Activated CD4-positive, alpha-beta memory T cell treated with anti-CD3 and anti-CD28 coated beads for 36 hours (primary cell): ENCODE measurements at regions of chr3 and their contacts with region 1.

Region 1: DNA sequence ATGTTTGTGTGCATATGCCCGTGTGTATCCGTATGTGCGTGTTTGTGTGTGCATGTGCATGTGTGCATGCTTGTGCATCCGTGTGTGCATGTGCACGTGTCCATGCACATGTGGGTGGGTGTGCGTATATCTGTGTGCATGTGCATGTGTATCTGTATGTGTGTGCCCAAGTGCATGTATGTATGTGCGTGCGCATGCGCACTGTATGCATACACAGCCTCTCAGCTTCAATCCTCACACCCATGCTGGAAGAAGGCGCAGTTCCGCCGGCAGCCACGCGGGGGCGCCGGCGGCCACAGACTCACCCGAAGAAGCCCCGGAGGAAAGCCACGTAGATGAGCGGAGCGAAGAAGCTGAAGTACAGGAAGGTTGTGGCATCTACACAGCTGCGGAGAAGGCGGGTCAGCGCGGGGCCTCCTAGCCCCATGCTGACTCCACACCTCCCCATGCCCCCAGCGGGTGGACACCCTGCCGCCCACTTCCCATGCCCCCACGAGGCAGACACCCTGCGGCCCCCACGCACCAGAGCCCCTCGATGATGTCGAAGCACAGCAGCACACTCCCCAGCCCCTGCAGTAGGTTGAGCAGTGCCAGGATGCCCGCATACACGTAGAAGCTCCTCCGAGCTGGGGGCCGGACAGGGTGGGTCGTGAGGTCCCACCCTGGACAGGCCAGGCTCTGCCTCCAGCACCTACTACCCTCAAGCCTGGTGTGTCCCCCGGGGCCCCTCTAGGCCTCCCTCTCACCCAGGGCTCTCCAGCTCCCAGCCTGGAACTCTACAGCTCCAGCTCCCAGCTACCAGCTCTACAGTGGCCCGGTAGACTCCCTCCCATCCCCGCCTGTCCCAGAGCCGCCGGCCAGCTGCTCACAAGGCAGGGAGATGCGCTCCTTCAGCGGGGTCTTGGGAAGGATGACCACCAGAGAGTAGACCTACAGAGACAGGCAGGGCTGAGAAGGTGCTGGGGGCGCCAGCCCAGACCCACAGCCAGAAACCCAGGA is 15.4 kb downstream of the TPRA1 start:
- DNase-seq: peak; percentile 91
- H3K4me3 Mint-ChIP-seq: no peak overlapping the region
- H3K27ac Mint-ChIP-seq: no peak overlapping the region
- H3K4me1 Mint-ChIP-seq: peaks cover 8% of the 10 kb centered on the region
- H3K27me3 Mint-ChIP-seq: no peaks in the 10 kb centered on the region

Region 2: GRCh38 chr3:127544192-127544802 is 30.9 kb before region 1 on chr3:
- CTCF ChIA-PET with region 1: interaction called, 22 read pairs
- POLR2A ChIA-PET with region 1: no interaction called
- intact Hi-C with region 1: no loop called
- DNase-seq: peak; percentile 77
- H3K4me3 Mint-ChIP-seq: no peak overlapping the region
- H3K27ac Mint-ChIP-seq: no peak overlapping the region
- H3K4me1 Mint-ChIP-seq: peaks cover 11% of the 10 kb centered on the region
- H3K27me3 Mint-ChIP-seq: peaks cover 3% of the 10 kb centered on the region

Region 3: DNA sequence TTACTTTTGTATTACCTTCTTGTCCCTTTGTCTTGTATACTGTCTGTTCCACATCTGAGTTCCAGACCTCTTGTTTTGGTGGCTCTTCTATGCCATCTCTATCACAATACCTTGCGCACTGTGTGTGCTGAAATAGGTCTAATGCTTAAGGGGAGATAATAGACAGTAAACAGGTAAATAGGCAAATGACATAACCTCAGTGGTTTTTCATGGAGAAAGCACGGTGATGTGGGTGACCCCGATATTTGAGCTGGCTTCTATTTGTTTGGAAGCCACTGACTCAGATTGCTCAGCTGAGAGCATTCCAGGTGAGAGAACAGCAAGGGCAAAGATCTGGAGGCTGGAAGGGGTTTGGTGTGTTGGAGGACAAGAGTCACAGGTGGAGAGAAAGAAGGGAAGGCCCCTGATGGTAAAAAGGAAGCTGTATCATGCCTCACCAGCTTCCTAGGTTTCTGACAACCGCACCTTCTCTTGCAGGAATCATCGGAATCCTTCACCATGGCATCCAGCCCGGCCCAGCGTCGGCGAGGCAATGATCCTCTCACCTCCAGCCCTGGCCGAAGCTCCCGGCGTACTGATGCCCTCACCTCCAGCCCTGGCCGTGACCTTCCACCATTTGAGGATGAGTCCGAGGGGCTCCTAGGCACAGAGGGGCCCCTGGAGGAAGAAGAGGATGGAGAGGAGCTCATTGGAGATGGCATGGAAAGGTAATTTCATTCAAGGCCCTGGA is 23.8 kb after region 1 on chr3:
- CTCF ChIA-PET with region 1: interaction called, 29 read pairs
- POLR2A ChIA-PET with region 1: interaction called, 8 read pairs
- intact Hi-C with region 1: loop called (anchors 2 kb)
- DNase-seq: no peak
- H3K4me3 Mint-ChIP-seq: peak overlapping the region; percentile 92
- H3K27ac Mint-ChIP-seq: peak overlapping the region; percentile 90
- H3K4me1 Mint-ChIP-seq: peaks cover 44% of the 10 kb centered on the region
- H3K27me3 Mint-ChIP-seq: no peaks in the 10 kb centered on the region

Region 4: GRCh38 chr3:127672516-127673190 is 97.5 kb after region 1 on chr3 and contains the start of gene ABTB1:
- CTCF ChIA-PET with region 1: interaction called, 9 read pairs
- POLR2A ChIA-PET with region 1: no interaction called
- intact Hi-C with region 1: loop called (anchors 5 kb)
- DNase-seq: peak; percentile 91
- H3K4me3 Mint-ChIP-seq: peak within 1 kb of the TSS; percentile 89
- H3K27ac Mint-ChIP-seq: peak within 1 kb of the TSS; percentile 89
- H3K4me1 Mint-ChIP-seq: peaks cover 23% of the 10 kb centered on the region
- H3K27me3 Mint-ChIP-seq: no peaks in the 10 kb centered on the region
- total RNA-seq, gene ABTB1: 14.8 TPM

Region 5: DNA sequence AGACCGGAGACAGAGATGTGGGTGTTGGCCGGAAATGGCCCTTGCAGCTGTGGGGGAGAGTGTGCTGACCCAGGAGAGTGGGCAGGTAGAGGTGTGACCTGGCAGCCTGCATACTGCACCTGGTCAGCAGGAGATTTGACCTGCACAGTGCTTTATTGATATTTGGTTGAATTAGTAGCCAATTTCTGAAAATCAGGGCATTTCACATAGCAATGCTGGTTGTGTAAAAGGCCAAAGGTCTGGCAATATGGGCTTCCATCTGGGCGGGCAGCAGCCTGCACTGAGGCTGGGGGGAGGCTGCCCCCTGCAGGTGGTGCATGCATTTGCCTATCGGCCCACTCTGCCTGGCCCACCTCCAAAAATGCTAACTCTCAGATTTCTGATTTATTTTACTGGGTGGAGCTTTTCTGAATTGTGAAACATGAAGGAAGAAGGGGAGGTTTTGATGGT is 256.6 kb after region 1 on chr3:
- CTCF ChIA-PET with region 1: interaction called, 8 read pairs
- POLR2A ChIA-PET with region 1: no interaction called
- intact Hi-C with region 1: loop called (anchors 10 kb)
- DNase-seq: peak; percentile 32
- H3K4me3 Mint-ChIP-seq: no peak overlapping the region
- H3K27ac Mint-ChIP-seq: no peak overlapping the region
- H3K4me1 Mint-ChIP-seq: no peaks in the 10 kb centered on the region
- H3K27me3 Mint-ChIP-seq: peaks cover 11% of the 10 kb centered on the region

Region 6: DNA sequence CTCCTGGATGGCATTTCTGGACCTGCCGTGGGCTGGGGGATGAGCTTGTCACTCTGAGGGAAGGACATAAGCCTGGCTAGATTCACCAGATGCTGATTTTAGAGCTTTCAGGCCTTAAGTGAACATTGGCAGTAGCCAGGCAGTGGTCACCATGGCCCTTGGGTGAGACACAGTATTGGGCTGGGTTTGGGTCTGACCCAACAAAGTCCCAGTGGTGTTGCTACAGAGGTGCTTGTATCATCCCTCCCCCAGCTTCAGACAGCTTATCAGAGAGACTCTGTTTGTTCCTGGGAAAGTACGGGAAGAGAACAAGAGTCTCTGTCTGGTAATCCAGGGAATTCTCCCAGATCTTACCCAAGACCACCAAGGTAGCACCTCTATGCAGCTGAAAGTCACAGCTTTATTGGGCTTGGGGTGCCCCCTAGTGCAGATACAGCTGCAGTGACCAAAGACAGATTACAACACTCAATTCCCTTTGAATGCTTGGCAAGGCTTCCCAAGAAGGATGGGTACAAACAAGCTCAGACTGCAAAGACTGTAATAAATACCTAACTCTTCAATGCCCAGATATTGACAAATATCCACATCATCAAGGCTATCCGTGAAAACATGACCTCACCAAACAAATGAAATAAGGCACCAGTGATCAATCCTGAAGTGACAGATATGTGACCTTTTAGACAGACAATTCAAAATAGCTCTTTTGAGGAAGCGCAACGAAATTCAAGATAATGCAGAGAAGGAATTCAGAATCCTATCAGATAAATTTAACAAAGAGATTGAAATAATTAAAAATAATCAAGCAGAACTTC is 558.3 kb after region 1 on chr3:
- CTCF ChIA-PET with region 1: interaction called, 3 read pairs
- POLR2A ChIA-PET with region 1: no interaction called
- intact Hi-C with region 1: loop called (anchors 2 kb)
- DNase-seq: peak; percentile 56
- H3K4me3 Mint-ChIP-seq: no peak overlapping the region
- H3K27ac Mint-ChIP-seq: no peak overlapping the region
- H3K4me1 Mint-ChIP-seq: no peaks in the 10 kb centered on the region
- H3K27me3 Mint-ChIP-seq: peaks cover 1% of the 10 kb centered on the region